Naive thymus-derived CD4-positive, alpha-beta T cell (primary cell): ENCODE measurements at regions of chr13 and their contacts with region 1.

Region 1: GRCh38 chr13:42392716-42393572 is 121.0 kb downstream of the AKAP11 start:
- DNase-seq: peak in 3 of 9 donors; percentile 13 to 51 (median 30)
- ATAC-seq: peak; percentile 68
- H3K4me3 ChIP-seq: no peak overlapping the region
- H3K4me3 Mint-ChIP-seq: peak overlapping the region; percentile 10 to 83 (median 68)
- H3K27ac ChIP-seq: no peak overlapping the region
- H3K27ac Mint-ChIP-seq: peak overlapping the region; percentile 2 to 98 (median 78)
- H3K4me1 ChIP-seq: peaks cover 47 to 68% of the 10 kb centered on the region in 2 donors
- H3K4me1 Mint-ChIP-seq: peaks cover 32 to 77% (median 73%) of the 10 kb centered on the region in 7 donors
- H3K27me3 ChIP-seq: no peaks in the 10 kb centered on the region
- H3K27me3 Mint-ChIP-seq: no peaks in the 10 kb centered on the region

Region 2: GRCh38 chr13:41916173-41916954 is 476.6 kb before region 1 on chr13:
- CTCF ChIA-PET with region 1: no interaction called
- POLR2A ChIA-PET with region 1: no interaction called
- intact Hi-C with region 1: loop called in 1 of 2 experiments (anchors 10 kb)
- DNase-seq: peak in 5 of 9 donors; percentile 15 to 47 (median 30)
- ATAC-seq: peak; percentile 76
- H3K4me3 ChIP-seq: no peak overlapping the region
- H3K4me3 Mint-ChIP-seq: peak overlapping the region in 9 of 10 donors; percentile 26 to 81 (median 57)
- H3K27ac ChIP-seq: no peak overlapping the region
- H3K27ac Mint-ChIP-seq: peak overlapping the region in 7 of 9 donors; percentile 0 to 87 (median 47)
- H3K4me1 ChIP-seq: peaks cover 11 to 15% of the 10 kb centered on the region in 2 donors
- H3K4me1 Mint-ChIP-seq: peaks cover 26 to 65% (median 44%) of the 10 kb centered on the region in 7 donors
- H3K27me3 ChIP-seq: no peaks in the 10 kb centered on the region
- H3K27me3 Mint-ChIP-seq: no peaks in the 10 kb centered on the region

Region 3: GRCh38 chr13:42328672-42329071 is 64.3 kb before region 1 on chr13:
- CTCF ChIA-PET with region 1: no interaction called
- POLR2A ChIA-PET with region 1: no interaction called
- intact Hi-C with region 1: loop called in 1 of 2 experiments (anchors 2 kb)
- DNase-seq: peak in 1 of 9 donors; percentile 26
- ATAC-seq: no peak
- H3K4me3 ChIP-seq: no peak overlapping the region
- H3K4me3 Mint-ChIP-seq: peak overlapping the region in 9 of 10 donors; percentile 9 to 70 (median 49)
- H3K27ac ChIP-seq: no peak overlapping the region
- H3K27ac Mint-ChIP-seq: peak overlapping the region; percentile 55 to 88 (median 78)
- H3K4me1 ChIP-seq: peaks cover 9 to 11% of the 10 kb centered on the region in 2 donors
- H3K4me1 Mint-ChIP-seq: peaks cover 13 to 44% (median 24%) of the 10 kb centered on the region in 7 donors
- H3K27me3 ChIP-seq: no peaks in the 10 kb centered on the region
- H3K27me3 Mint-ChIP-seq: no peaks in the 10 kb centered on the region

Region 4: GRCh38 chr13:42363941-42364612 is 28.9 kb before region 1 on chr13:
- CTCF ChIA-PET with region 1: no interaction called
- POLR2A ChIA-PET with region 1: no interaction called
- intact Hi-C with region 1: no loop called
- DNase-seq: no peak
- ATAC-seq: no peak
- H3K4me3 ChIP-seq: no peak overlapping the region
- H3K4me3 Mint-ChIP-seq: no peak overlapping the region
- H3K27ac ChIP-seq: no peak overlapping the region
- H3K27ac Mint-ChIP-seq: no peak overlapping the region
- H3K4me1 ChIP-seq: peaks cover 0 to 2% of the 10 kb centered on the region in 2 donors
- H3K4me1 Mint-ChIP-seq: peaks cover 4 to 21% (median 17%) of the 10 kb centered on the region in 7 donors
- H3K27me3 ChIP-seq: no peaks in the 10 kb centered on the region
- H3K27me3 Mint-ChIP-seq: no peaks in the 10 kb centered on the region

Region 5: DNA sequence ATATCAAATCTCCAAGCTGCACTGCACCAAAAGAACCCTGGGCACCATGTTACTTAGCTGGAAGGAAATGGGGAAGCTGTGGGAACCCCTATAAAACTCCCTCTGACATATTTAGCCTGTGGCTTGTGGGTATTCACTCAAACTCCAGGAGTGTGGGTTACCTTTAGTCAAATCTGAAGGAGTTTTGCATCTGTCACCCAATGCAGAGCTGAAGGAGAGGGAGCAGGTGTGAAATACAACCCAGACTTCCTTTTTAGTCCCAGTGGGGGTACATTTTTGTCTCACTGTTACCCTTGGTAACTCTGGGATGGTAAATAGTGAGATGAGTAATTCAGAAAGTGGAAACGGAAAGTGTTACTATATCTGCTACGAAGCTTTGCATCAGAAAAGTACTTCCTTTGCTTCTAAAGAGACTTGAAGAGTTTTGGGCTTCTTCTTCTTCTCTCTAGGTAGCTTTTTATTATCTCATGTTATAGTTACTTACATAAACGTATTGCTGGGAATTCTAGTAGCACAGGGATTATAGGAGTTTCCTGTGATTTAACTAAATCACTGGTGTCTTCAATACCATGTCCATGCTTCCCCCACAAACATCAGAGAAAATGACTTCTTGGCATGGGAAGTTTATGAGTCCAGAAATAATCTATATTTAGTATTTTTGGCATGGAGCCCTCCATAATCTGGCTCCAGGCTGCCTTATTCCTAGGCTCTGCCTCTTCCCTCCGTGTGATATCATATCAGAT is 15.1 kb before region 1 on chr13:
- CTCF ChIA-PET with region 1: no interaction called
- POLR2A ChIA-PET with region 1: interaction called, 3 read pairs
- intact Hi-C with region 1: loop called (anchors 1 kb)
- DNase-seq: peak in 2 of 9 donors; percentile 28 to 56
- ATAC-seq: peak; percentile 83
- H3K4me3 ChIP-seq: no peak overlapping the region
- H3K4me3 Mint-ChIP-seq: peak overlapping the region in 5 of 10 donors; percentile 16 to 63 (median 33)
- H3K27ac ChIP-seq: peak overlapping the region; percentile 19
- H3K27ac Mint-ChIP-seq: peak overlapping the region in 6 of 9 donors; percentile 33 to 92 (median 55)
- H3K4me1 ChIP-seq: peaks cover 17 to 18% of the 10 kb centered on the region in 2 donors
- H3K4me1 Mint-ChIP-seq: peaks cover 10 to 61% (median 29%) of the 10 kb centered on the region in 7 donors
- H3K27me3 ChIP-seq: no peaks in the 10 kb centered on the region
- H3K27me3 Mint-ChIP-seq: no peaks in the 10 kb centered on the region

Region 6: GRCh38 chr13:42420304-42420703 is 27.4 kb after region 1 on chr13:
- CTCF ChIA-PET with region 1: no interaction called
- POLR2A ChIA-PET with region 1: no interaction called
- intact Hi-C with region 1: no loop called
- DNase-seq: peak in 1 of 9 donors; percentile 69
- ATAC-seq: no peak
- H3K4me3 ChIP-seq: no peak overlapping the region
- H3K4me3 Mint-ChIP-seq: peak overlapping the region in 1 of 10 donors; percentile 34
- H3K27ac ChIP-seq: no peak overlapping the region
- H3K27ac Mint-ChIP-seq: peak overlapping the region in 1 of 9 donors; percentile 45
- H3K4me1 ChIP-seq: no peaks in the 10 kb centered on the region
- H3K4me1 Mint-ChIP-seq: peaks cover 0 to 21% (median 0%) of the 10 kb centered on the region in 7 donors
- H3K27me3 ChIP-seq: no peaks in the 10 kb centered on the region
- H3K27me3 Mint-ChIP-seq: peaks cover 0 to 4% (median 0%) of the 10 kb centered on the region in 5 donors

Region 7: DNA sequence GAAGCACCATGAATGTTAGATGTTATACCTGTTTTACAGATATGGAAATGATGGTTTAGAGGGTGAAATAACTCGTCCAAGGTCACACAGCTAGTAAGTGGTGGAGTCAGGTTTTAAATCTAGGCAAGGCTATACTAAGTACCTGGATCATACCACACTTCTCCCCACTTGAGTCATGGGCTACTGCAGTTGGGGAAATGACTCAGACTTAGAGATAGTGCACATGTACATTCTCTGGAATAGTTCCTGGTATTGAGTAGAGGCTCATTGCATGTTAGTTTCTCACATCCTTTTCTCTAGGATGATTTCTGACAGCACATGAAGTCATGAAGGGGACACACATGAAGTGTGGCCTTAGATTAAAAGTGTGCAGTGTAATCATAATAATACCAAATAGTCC is 104.9 kb after region 1 on chr13:
- CTCF ChIA-PET with region 1: no interaction called
- POLR2A ChIA-PET with region 1: no interaction called
- intact Hi-C with region 1: loop called in 1 of 2 experiments (anchors 5 kb)
- DNase-seq: no peak
- ATAC-seq: peak; percentile 65
- H3K4me3 ChIP-seq: no peak overlapping the region
- H3K4me3 Mint-ChIP-seq: no peak overlapping the region
- H3K27ac ChIP-seq: no peak overlapping the region
- H3K27ac Mint-ChIP-seq: no peak overlapping the region
- H3K4me1 ChIP-seq: peaks cover 0 to 6% of the 10 kb centered on the region in 2 donors
- H3K4me1 Mint-ChIP-seq: peaks cover 10 to 43% (median 20%) of the 10 kb centered on the region in 7 donors
- H3K27me3 ChIP-seq: no peaks in the 10 kb centered on the region
- H3K27me3 Mint-ChIP-seq: peaks cover 0 to under 1% (median 0%) of the 10 kb centered on the region in 5 donors

Region 8: GRCh38 chr13:42821437-42821836 is 428.5 kb after region 1 on chr13:
- CTCF ChIA-PET with region 1: no interaction called
- POLR2A ChIA-PET with region 1: no interaction called
- intact Hi-C with region 1: no loop called
- DNase-seq: no peak
- ATAC-seq: no peak
- H3K4me3 ChIP-seq: no peak overlapping the region
- H3K4me3 Mint-ChIP-seq: no peak overlapping the region
- H3K27ac ChIP-seq: no peak overlapping the region
- H3K27ac Mint-ChIP-seq: no peak overlapping the region
- H3K4me1 ChIP-seq: no peaks in the 10 kb centered on the region
- H3K4me1 Mint-ChIP-seq: no peaks in the 10 kb centered on the region
- H3K27me3 ChIP-seq: no peaks in the 10 kb centered on the region
- H3K27me3 Mint-ChIP-seq: peaks cover 9 to 41% (median 30%) of the 10 kb centered on the region in 5 donors